OCI-LY7 (cell line): ENCODE measurements at regions of chr3 and their contacts with region 1.

Region 1: GRCh38 chr3:72756900-72757299 is 91.3 kb downstream of the SHQ1 start:
- DNase-seq: peak; percentile 95
- H3K4me3 ChIP-seq: peak overlapping the region; percentile 56
- H3K27ac ChIP-seq: peak overlapping the region; percentile 75
- H3K4me1 ChIP-seq: peaks cover 61% of the 10 kb centered on the region
- CTCF ChIP-seq: no peak

Region 2: DNA sequence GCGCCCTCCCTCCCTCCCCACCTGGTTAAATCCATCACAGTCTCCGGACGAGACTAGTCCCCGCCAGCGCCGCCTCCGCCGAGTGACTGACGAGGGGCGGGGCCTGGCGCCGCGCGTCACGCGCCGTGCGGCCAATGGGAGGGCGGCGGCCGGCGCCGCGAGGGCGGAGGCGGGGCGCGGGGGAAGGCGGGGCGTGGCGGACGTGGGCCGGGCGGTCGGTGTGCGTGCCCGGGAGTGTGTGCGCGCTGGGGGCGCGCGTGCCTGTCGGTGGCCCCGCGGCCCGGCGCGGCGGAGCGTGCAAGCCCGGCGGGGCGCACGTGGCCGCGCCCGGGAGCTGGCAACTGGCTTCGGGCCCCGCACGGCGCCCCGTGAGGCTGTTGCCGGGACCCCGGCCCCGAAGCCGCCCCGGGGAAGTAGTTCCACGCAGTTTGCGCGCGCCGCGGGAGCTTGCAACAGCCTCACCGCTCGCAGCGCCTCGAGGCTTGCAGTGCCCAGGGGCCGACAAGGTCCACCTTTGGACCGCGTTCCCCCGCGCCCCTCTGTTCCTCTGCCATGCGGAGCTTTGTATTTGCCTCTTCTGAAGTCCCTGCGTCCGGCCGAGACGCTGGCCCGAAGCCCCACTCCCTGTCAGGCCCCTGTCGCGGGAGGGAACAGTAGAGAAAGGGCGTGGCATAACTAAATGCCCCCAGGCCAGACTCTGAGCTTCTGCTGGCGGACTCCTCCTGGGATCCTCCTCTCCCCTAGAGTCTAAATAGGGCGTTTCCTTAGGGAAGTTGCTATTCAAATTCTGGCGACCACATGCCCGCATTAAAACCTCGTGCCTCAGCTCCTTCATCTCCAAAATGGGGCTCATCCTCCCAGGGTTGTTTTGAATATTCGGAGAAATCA is 309.6 kb before region 1 on chr3:
- CTCF ChIA-PET with region 1: no interaction called
- POLR2A ChIA-PET with region 1: interaction called, 3 read pairs
- intact Hi-C with region 1: loop called (anchors 10 kb)
- DNase-seq: peak; percentile 92
- H3K4me3 ChIP-seq: peak overlapping the region; percentile 86
- H3K27ac ChIP-seq: no peak overlapping the region
- H3K4me1 ChIP-seq: peaks cover 42% of the 10 kb centered on the region
- CTCF ChIP-seq: no peak

Region 3: DNA sequence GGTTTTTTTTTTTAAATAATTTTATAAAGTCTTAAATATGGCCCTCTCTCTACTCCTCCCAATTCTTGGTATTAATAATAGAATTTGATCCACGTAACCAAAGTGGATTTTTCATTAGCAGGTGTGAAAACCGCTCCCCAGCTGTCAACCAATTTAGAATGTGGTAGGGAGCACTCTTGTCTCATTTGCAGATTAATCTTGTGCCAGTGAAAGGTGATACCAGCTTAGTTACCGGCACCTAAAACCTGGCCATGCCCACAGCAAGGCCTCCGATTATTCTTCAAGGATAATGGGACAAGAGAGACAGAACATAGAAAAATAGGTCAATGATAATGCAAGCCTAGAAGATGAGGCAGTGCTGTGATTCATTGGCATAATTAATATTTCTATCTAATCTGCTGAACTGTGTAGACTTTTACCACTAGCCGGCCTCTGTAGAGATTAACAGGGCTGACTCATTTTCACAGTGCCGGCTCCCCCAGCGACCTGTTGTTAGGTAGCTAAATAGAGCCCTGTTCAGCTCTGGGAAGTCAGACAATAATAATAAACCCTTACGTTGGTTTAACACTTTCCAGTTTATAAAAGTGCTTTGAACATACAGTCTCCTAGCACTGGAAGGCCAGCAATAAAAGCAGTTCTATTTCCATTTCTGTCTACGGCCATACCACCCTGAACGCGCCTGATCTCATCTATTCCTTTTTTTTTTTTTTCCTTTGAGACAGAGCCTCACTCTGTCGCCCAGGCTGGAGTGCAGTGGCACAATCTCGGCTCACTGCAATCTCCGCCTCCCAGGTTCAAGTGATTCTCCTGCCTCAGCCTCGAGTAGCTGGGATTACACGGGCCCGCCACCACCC is 11.5 kb before region 1 on chr3:
- CTCF ChIA-PET with region 1: no interaction called
- POLR2A ChIA-PET with region 1: interaction called, 10 read pairs
- intact Hi-C with region 1: no loop called
- DNase-seq: no peak
- H3K4me3 ChIP-seq: no peak overlapping the region
- H3K27ac ChIP-seq: no peak overlapping the region
- H3K4me1 ChIP-seq: peaks cover 28% of the 10 kb centered on the region
- CTCF ChIP-seq: no peak

Region 4: GRCh38 chr3:72862314-72863090 is 105.6 kb after region 1 on chr3:
- CTCF ChIA-PET with region 1: no interaction called
- POLR2A ChIA-PET with region 1: no interaction called
- intact Hi-C with region 1: no loop called
- DNase-seq: no peak
- H3K4me3 ChIP-seq: no peak overlapping the region
- H3K27ac ChIP-seq: no peak overlapping the region
- H3K4me1 ChIP-seq: no peaks in the 10 kb centered on the region
- CTCF ChIP-seq: no peak